ENCODE measurements at regions of chr3 and their contacts with region 1.

Region 1: DNA sequence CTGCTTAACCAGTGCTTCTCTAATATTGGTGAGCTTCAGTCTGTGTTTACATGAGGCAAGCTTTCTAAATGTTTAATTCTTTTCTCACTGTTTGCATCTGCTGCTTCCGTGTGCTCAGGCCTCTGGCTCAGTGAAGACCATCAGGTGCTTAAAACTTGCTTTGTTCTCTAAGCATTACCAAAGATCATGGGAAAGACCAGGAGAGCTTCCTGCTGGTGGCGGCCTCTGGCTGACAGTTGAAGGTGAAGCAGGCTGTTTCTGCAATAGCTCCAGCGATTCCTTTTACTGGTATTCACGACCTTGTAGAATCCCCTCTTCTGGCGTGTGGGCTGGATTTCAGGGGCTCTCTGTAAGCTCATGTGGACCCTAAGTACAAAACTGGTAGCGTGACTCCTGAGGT is 45.1 kb downstream of the EDEM1 start:
- DNase-seq: no peak
- H3K4me3 Mint-ChIP-seq: no peak overlapping the region
- H3K27ac Mint-ChIP-seq: no peak overlapping the region
- H3K4me1 Mint-ChIP-seq: peaks cover 11% of the 10 kb centered on the region
- H3K27me3 Mint-ChIP-seq: no peaks in the 10 kb centered on the region
- CTCF ChIP-seq: no peak

Region 2: DNA sequence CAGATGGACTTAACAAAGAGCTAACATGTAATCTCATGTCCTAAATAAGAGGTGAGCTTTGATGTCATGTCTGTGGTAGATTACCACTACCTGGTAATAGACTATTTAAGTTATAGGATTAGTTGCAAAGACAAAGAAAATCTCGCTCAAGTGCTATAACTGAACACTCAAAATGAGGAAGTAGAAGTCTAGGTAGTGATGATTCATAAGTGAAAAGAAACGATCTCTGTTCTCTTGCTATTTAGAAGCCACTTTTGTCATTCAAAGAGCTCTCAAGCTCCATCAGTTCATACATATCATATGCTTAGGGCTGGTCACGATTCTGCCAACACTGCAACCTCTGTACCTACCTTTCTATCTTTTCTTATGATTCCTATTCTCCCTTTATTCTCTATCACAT is 65.9 kb after region 1 on chr3:
- CTCF ChIA-PET with region 1: no interaction called
- intact Hi-C with region 1: loop called (anchors 2 kb)
- DNase-seq: no peak
- H3K4me3 Mint-ChIP-seq: no peak overlapping the region
- H3K27ac Mint-ChIP-seq: no peak overlapping the region
- H3K4me1 Mint-ChIP-seq: peaks cover 9% of the 10 kb centered on the region
- H3K27me3 Mint-ChIP-seq: no peaks in the 10 kb centered on the region
- CTCF ChIP-seq: no peak

Region 3: GRCh38 chr3:5677555-5677954 is 445.0 kb after region 1 on chr3:
- CTCF ChIA-PET with region 1: no interaction called
- intact Hi-C with region 1: no loop called
- DNase-seq: no peak
- H3K4me3 Mint-ChIP-seq: no peak overlapping the region
- H3K27ac Mint-ChIP-seq: no peak overlapping the region
- H3K4me1 Mint-ChIP-seq: no peaks in the 10 kb centered on the region
- H3K27me3 Mint-ChIP-seq: no peaks in the 10 kb centered on the region
- CTCF ChIP-seq: no peak

Region 4: GRCh38 chr3:5735896-5736295 is 503.3 kb after region 1 on chr3:
- CTCF ChIA-PET with region 1: no interaction called
- intact Hi-C with region 1: no loop called
- DNase-seq: no peak
- H3K4me3 Mint-ChIP-seq: no peak overlapping the region
- H3K27ac Mint-ChIP-seq: no peak overlapping the region
- H3K4me1 Mint-ChIP-seq: no peaks in the 10 kb centered on the region
- H3K27me3 Mint-ChIP-seq: no peaks in the 10 kb centered on the region
- CTCF ChIP-seq: no peak

Region 5: GRCh38 chr3:6039971-6040370 is 807.4 kb after region 1 on chr3:
- CTCF ChIA-PET with region 1: no interaction called
- intact Hi-C with region 1: no loop called
- DNase-seq: no peak
- H3K4me3 Mint-ChIP-seq: no peak overlapping the region
- H3K27ac Mint-ChIP-seq: no peak overlapping the region
- H3K4me1 Mint-ChIP-seq: no peaks in the 10 kb centered on the region
- H3K27me3 Mint-ChIP-seq: no peaks in the 10 kb centered on the region
- CTCF ChIP-seq: no peak

Measured in Calu3 (cell line).